Activated naive CD4-positive, alpha-beta T cell treated with anti-CD3 and anti-CD28 coated beads for 36 hours (primary cell): ENCODE measurements at regions of chr11 and their contacts with region 1.

Region 1: GRCh38 chr11:112280268-112281126 is 19.8 kb upstream of the PLET1 start:
- DNase-seq: peak; percentile 79
- H3K4me3 Mint-ChIP-seq: peak overlapping the region; percentile 76
- H3K27ac Mint-ChIP-seq: no peak overlapping the region
- H3K4me1 Mint-ChIP-seq: peaks cover 2% of the 10 kb centered on the region
- H3K27me3 Mint-ChIP-seq: no peaks in the 10 kb centered on the region

Region 2: GRCh38 chr11:111565114-111565720 is 715.3 kb before region 1 on chr11:
- CTCF ChIA-PET with region 1: no interaction called
- intact Hi-C with region 1: loop called (anchors 5 kb)
- DNase-seq: peak; percentile 83
- H3K4me3 Mint-ChIP-seq: no peak overlapping the region
- H3K27ac Mint-ChIP-seq: no peak overlapping the region
- H3K4me1 Mint-ChIP-seq: no peaks in the 10 kb centered on the region
- H3K27me3 Mint-ChIP-seq: peaks cover 2% of the 10 kb centered on the region

Region 3: DNA sequence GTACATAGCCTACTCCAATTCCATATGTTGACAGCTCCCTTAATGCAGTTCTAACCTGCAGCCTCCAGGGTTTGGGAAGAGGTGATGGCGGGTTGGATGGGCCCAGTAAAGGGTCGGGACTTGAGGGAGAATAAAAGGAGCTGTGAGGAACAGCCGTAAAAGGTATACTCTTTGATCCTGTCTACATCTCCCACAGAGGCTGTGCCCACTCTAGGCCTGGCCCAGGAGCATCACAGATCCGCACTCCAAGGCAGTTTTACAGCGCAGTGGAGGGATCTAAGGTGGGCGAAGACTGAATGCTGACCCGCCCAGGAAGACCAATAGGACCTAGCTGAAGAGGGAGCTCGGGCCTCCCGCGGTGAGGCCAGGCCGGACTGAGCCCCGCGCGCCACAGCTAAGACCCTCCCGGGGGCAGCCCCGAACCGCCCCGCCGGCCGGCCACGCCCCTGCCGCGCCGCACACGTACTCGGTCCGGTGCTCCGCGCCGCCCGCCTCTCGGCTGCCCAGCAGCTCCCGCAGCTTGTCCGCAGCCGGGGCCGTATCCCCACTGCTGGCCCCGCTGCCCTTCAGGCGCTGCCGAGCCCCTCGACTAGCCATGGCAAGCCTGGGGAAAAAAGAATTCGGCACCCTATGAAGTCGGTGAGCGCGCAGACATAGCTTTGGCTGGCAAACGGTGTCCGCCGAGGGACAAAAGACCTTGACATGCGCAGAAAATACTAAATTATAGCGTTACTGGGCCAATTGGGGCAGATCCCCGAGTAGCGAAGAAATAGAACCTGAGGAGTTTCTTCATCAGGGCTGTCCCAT is 409.4 kb before region 1 on chr11 and contains the start of gene ALG9:
- CTCF ChIA-PET with region 1: interaction called, 4 read pairs
- intact Hi-C with region 1: loop called (anchors 2 kb)
- DNase-seq: peak; percentile 93
- H3K4me3 Mint-ChIP-seq: peak within 1 kb of the TSS; percentile 89
- H3K27ac Mint-ChIP-seq: peak within 1 kb of the TSS; percentile 83
- H3K4me1 Mint-ChIP-seq: peaks cover 25% of the 10 kb centered on the region
- H3K27me3 Mint-ChIP-seq: no peaks in the 10 kb centered on the region
- total RNA-seq, gene ALG9: 21.3 to 21.9 TPM

Region 4: GRCh38 chr11:111932611-111932950 is 347.9 kb before region 1 on chr11:
- CTCF ChIA-PET with region 1: interaction called, 4 read pairs
- intact Hi-C with region 1: loop called (anchors 1 kb)
- DNase-seq: no peak
- H3K4me3 Mint-ChIP-seq: no peak overlapping the region
- H3K27ac Mint-ChIP-seq: peak overlapping the region; percentile 68
- H3K4me1 Mint-ChIP-seq: peaks cover 36% of the 10 kb centered on the region
- H3K27me3 Mint-ChIP-seq: no peaks in the 10 kb centered on the region

Region 5: DNA sequence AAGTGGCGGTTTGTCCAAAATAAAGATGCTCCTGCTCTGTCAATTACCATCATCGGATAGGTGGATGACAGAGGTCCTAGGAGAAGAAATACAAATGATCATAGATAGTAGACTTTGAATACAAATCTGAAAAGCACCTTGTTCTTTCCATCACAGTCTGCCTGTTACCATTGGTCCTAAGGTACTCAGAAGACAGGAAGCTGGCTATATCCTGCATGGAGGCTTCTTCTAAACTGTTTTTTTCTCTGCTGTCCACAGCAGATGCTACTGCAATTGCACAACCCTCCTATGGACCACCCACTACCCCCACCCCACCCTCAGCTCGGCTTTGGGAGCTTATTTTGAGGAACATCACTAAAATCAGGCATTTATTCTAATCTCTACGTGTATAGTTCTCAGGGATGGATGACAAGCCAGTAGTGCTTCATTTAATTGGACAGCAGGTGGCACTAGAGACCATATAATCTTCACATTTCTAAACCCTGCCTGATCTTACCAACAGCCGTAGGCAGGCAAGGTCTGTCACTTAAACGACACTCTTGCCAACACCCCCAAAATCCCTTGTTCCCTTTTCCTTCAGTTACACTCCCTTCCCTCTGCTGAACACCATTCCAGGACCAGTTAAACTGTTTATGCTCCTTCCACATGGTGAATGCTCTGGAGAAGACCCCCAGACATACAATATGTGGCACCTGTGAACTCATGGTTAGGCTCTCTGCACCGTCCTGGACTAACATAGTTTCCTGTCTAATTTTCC is 60.8 kb before region 1 on chr11:
- CTCF ChIA-PET with region 1: interaction called, 212 read pairs
- intact Hi-C with region 1: loop called (anchors 1 kb)
- DNase-seq: peak; percentile 48
- H3K4me3 Mint-ChIP-seq: no peak overlapping the region
- H3K27ac Mint-ChIP-seq: no peak overlapping the region
- H3K4me1 Mint-ChIP-seq: no peaks in the 10 kb centered on the region
- H3K27me3 Mint-ChIP-seq: no peaks in the 10 kb centered on the region

Region 6: GRCh38 chr11:112265721-112266409 is 14.6 kb before region 1 on chr11:
- CTCF ChIA-PET with region 1: interaction called, 19 read pairs
- intact Hi-C with region 1: no loop called
- DNase-seq: no peak
- H3K4me3 Mint-ChIP-seq: no peak overlapping the region
- H3K27ac Mint-ChIP-seq: no peak overlapping the region
- H3K4me1 Mint-ChIP-seq: no peaks in the 10 kb centered on the region
- H3K27me3 Mint-ChIP-seq: no peaks in the 10 kb centered on the region

Region 7: DNA sequence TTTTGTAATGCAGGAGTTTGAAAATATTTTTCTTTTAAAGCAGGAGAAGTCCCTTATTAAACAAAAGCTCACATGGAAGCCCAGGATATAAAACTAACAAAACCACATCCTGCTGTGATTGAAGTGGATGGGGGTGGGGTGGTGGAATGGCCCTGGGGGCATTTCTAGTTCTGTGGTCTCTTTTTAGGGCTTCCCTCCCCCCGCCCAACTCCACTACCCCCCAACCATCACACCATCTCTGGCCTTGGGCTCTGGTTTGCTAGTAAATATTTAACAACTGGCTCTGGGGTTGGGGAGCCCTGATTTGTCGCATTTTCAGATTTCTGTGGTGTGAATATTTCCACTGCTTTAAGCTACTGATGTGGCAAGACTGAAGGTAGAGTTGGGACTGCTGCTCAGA is 259.8 kb after region 1 on chr11:
- CTCF ChIA-PET with region 1: no interaction called
- intact Hi-C with region 1: no loop called
- DNase-seq: no peak
- H3K4me3 Mint-ChIP-seq: no peak overlapping the region
- H3K27ac Mint-ChIP-seq: no peak overlapping the region
- H3K4me1 Mint-ChIP-seq: peaks cover 41% of the 10 kb centered on the region
- H3K27me3 Mint-ChIP-seq: peaks cover 6% of the 10 kb centered on the region